Ascending aorta (tissue), 2 donors: ENCODE measurements at regions of chr7 and their contacts with region 1.

Region 1: GRCh38 chr7:131284702-131285419 is 42.8 kb upstream of the MKLN1 start:
- DNase-seq: peak; percentile 53 to 93
- H3K4me3 ChIP-seq: peak overlapping the region in 1 of 2 donors; percentile 29
- H3K27ac ChIP-seq: peak overlapping the region; percentile 91 to 92
- H3K4me1 ChIP-seq: peaks cover 11 to 28% of the 10 kb centered on the region in 2 donors
- H3K27me3 ChIP-seq: no peaks in the 10 kb centered on the region
- CTCF ChIP-seq: no peak

Region 2: DNA sequence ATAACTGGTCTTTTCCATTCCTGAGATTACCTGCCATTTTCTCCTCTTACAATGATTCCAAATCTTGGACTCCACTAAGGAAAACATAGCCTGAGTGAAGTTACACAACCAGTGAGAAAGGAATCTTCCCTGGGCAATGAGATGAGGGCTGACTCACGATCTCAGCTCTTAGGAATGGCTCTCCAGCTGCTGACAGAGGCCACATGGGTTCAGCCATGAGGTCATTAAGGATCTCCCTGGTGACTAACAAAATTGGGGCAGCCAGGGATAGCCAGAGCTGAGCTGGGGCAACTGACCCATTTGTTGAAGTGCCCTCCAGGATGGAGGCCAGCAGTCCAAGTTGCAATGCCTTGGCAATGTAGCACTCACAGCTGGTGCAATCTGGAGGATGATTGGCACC is 35.9 kb before region 1 on chr7:
- intact Hi-C with region 1: loop called (anchors 2 kb)
- DNase-seq: peak; percentile 43 to 91
- H3K4me3 ChIP-seq: no peak overlapping the region
- H3K27ac ChIP-seq: no peak overlapping the region
- H3K4me1 ChIP-seq: peaks cover 0 to 7% of the 10 kb centered on the region in 2 donors
- H3K27me3 ChIP-seq: no peaks in the 10 kb centered on the region
- CTCF ChIP-seq: no peak

Region 3: GRCh38 chr7:131327626-131328376 is 42.9 kb after region 1 on chr7 and contains the start of gene MKLN1:
- intact Hi-C with region 1: loop called (anchors 2 kb)
- DNase-seq: peak; percentile 68 to 95
- H3K4me3 ChIP-seq: peak within 1 kb of the TSS; percentile 72 to 93
- H3K27ac ChIP-seq: peak within 1 kb of the TSS; percentile 95 to 97
- H3K4me1 ChIP-seq: peaks cover 0 to 10% of the 10 kb centered on the region in 2 donors
- H3K27me3 ChIP-seq: no peaks in the 10 kb centered on the region
- CTCF ChIP-seq: no peak
- total RNA-seq, gene MKLN1: 18.0 TPM